AG04450 (cell line): ENCODE measurements at regions of chr7 and their contacts with region 1.

Region 1: GRCh38 chr7:18693406-18693805 is 197.9 kb downstream of the HDAC9 start:
- DNase-seq: peak; percentile 63
- H3K4me3 ChIP-seq: no peak overlapping the region
- H3K27ac ChIP-seq: no peak overlapping the region
- H3K27me3 ChIP-seq: no peaks in the 10 kb centered on the region
- CTCF ChIP-seq: peak; percentile 85

Region 2: DNA sequence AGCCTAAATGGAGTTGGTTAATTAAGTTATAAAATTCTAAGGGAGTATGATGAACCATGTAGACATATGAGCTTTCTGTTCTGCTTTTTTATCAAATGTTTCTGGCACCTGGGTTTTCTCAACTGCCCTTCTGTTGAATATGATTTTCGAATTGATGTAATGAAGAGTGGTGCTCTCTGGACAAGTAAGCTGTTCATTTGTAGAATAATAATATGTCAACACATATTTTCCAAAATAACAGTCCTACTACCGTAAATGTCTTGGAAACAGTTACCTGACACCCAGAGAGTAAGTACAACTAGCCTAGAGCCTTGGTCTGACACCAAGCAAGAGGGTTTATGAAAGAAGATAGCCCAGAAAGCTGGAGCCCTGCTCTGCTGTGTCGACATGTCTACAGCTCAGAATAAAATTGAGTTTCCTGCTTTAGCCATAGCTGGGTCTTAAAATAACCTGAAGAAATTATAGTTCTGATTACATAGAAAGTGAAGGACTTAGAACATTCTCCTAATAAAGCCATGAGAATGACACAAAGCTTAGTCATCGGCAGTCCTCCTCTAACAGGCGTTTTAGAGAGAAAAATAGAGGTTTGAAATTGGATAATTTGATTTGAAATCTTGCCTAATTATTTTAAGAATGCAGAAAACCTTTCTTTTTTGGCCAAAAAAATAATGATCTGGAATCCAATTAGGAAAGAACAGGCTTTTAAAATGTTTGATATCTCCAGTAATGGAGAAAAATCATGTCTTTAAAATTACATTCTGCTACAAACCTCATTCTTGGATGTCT is 172.8 kb before region 1 on chr7:
- CTCF ChIA-PET with region 1: no interaction called
- POLR2A ChIA-PET with region 1: no interaction called
- DNase-seq: no peak
- H3K4me3 ChIP-seq: no peak overlapping the region
- H3K27ac ChIP-seq: no peak overlapping the region
- H3K27me3 ChIP-seq: no peaks in the 10 kb centered on the region
- CTCF ChIP-seq: no peak

Region 3: DNA sequence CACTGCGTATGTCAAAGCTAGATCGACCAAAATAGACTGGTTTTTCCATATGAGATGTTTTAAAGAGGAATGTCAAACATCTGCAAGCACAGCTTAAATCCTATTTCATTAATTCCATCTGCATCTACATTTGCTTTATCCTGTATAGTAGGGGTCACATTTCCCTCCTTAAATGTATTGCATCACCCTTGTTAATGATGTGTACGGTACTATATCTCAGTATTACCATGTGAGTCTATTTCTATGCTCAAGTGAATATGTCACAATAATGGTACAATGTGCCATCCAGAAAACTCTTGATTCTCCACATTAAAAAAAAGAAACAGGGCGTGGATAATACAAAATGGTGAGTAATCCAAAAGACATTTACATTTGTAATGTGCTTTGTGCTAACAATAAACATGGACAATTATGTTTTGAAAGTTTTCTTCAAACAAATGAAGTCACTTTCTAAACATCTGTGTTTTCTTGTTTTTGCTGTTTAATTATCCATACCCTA is 367.4 kb after region 1 on chr7:
- CTCF ChIA-PET with region 1: no interaction called
- POLR2A ChIA-PET with region 1: no interaction called
- DNase-seq: no peak
- H3K4me3 ChIP-seq: no peak overlapping the region
- H3K27ac ChIP-seq: no peak overlapping the region
- H3K27me3 ChIP-seq: no peaks in the 10 kb centered on the region
- CTCF ChIP-seq: no peak

Region 4: DNA sequence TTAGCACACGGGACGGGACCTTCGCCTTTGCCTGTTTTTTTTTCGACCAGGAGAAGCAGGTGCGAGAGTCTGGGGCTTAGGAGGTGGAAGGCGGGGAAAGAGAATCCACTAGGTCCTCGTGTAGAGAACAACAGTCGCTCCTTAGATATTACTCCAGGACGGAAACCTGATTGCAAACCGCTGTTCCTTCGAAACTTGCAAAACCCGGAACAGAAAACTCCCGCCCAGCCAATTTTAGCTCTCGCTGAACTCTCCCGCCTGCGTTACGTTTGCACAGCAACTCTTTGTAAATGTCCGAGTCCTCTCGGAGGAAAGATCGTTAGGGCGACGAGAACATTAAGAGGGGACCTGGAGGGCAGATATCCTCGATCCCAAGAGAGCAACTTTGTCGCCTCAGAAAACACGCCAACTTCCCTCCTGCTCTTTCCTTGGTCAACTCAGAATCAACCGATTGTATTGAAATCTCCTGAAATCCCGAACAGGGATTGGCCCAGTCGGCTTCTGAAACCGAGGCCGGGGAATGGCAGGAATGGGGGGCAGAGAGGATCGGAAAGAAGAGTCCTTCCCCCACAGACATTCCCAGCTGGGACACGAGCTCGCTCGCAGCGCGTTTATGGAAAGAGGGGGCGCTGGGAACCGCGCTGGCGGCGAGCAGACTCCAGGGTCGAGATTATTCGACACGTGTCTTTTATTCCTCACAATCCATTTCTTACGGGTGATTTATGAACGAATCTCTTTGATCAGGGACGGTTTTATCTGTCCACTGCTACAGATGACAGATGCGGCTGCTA is 414.1 kb after region 1 on chr7:
- CTCF ChIA-PET with region 1: interaction called, 12 read pairs
- POLR2A ChIA-PET with region 1: no interaction called
- DNase-seq: no peak
- H3K4me3 ChIP-seq: peak overlapping the region; percentile 65
- H3K27ac ChIP-seq: peak overlapping the region; percentile 75
- H3K27me3 ChIP-seq: no peaks in the 10 kb centered on the region
- CTCF ChIP-seq: no peak